AG04450 (cell line): ENCODE measurements at regions of chr3 and their contacts with region 1.

Region 1: GRCh38 chr3:11335056-11335608 is 62.9 kb downstream of the ATG7 start:
- DNase-seq: peak; percentile 45
- H3K4me3 ChIP-seq: no peak overlapping the region
- H3K27ac ChIP-seq: no peak overlapping the region
- H3K27me3 ChIP-seq: no peaks in the 10 kb centered on the region
- CTCF ChIP-seq: peak; percentile 71

Region 2: DNA sequence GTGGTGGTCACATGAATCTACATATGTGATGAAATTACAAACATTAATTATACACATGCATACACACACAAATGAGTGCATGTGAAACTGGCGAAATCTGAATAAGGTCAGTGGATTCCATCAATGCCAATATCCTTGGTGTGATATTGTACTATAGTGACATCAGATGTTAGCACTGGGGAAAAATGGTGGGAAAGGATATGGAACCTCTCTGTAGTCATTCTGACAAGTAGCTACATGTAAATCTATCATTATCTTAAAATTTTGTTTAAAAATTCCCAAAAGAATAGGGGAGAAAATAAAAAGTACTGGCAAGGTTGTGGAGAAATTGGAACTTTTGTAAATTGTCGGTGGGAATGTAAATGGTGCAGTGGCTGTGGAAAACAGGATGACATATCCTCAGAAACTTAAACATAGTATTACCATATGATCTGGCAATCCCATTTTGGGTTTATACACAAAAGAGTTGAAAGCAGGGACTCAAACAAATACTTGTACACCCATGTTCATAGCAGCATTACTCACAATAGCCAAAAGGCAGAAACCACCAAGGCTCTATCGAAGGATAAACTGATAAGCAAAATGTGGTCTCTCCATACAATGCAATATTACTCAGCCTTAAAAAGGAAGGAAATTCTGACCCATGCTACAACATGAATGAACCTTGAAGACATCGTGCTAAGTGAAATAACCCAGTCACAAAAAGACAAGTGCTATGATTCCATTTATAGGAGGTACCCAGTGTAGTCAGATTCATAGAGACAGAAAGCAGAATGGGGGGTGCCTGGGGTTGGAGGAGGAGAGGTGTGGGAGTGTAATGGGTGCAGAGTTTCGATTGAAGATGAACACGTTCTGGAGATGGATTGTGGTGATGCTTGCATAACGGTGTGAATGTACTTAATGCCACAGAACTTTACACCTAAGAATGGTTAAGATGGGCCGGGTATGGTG is 206.2 kb before region 1 on chr3:
- CTCF ChIA-PET with region 1: no interaction called
- POLR2A ChIA-PET with region 1: no interaction called
- DNase-seq: no peak
- H3K4me3 ChIP-seq: no peak overlapping the region
- H3K27ac ChIP-seq: no peak overlapping the region
- H3K27me3 ChIP-seq: no peaks in the 10 kb centered on the region
- CTCF ChIP-seq: no peak

Region 3: GRCh38 chr3:11155341-11156025 is 179.6 kb before region 1 on chr3:
- CTCF ChIA-PET with region 1: interaction called, 112 read pairs
- POLR2A ChIA-PET with region 1: no interaction called
- DNase-seq: peak; percentile 60
- H3K4me3 ChIP-seq: peak overlapping the region; percentile 85
- H3K27ac ChIP-seq: peak overlapping the region; percentile 75
- H3K27me3 ChIP-seq: no peaks in the 10 kb centered on the region
- CTCF ChIP-seq: peak; percentile 96

Region 4: GRCh38 chr3:11211531-11212298 is 123.4 kb before region 1 on chr3:
- CTCF ChIA-PET with region 1: interaction called, 16 read pairs
- POLR2A ChIA-PET with region 1: no interaction called
- DNase-seq: no peak
- H3K4me3 ChIP-seq: no peak overlapping the region
- H3K27ac ChIP-seq: no peak overlapping the region
- H3K27me3 ChIP-seq: no peaks in the 10 kb centered on the region
- CTCF ChIP-seq: peak; percentile 35

Region 5: GRCh38 chr3:11271986-11272904 is 62.9 kb before region 1 on chr3 and contains the start of gene ATG7:
- CTCF ChIA-PET with region 1: interaction called, 9 read pairs
- POLR2A ChIA-PET with region 1: interaction called, 10 read pairs
- DNase-seq: peak; percentile 93
- H3K4me3 ChIP-seq: peak within 1 kb of the TSS; percentile 97
- H3K27ac ChIP-seq: peak within 1 kb of the TSS; percentile 70
- H3K27me3 ChIP-seq: no peaks in the 10 kb centered on the region
- CTCF ChIP-seq: 0 out of 2 replicates have a peak, but pooled peaks have one; percentile 6
- polyA plus RNA-seq, gene ATG7: 35.4 and 51.7 TPM in 2 replicates

Region 6: DNA sequence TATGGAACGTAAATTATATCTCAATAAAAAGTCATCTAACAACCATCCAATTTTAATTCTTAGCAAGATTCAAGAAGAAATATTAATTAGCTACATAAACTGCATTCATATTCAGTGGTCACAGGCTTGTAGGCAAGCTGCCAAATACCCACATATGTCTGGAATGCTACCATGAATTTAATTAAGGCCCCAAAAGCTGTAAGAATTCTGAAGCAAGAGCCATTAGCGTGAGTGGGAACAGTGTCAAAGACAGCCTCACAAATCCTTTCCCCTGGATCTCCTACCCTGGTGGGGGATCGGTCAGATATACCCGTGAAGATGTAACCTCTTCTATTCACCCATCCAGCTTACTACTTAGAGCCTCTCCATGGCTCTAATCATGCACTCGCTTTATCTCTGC is 23.0 kb before region 1 on chr3:
- CTCF ChIA-PET with region 1: interaction called, 21 read pairs
- POLR2A ChIA-PET with region 1: no interaction called
- DNase-seq: no peak
- H3K4me3 ChIP-seq: no peak overlapping the region
- H3K27ac ChIP-seq: no peak overlapping the region
- H3K27me3 ChIP-seq: no peaks in the 10 kb centered on the region
- CTCF ChIP-seq: no peak

Region 7: DNA sequence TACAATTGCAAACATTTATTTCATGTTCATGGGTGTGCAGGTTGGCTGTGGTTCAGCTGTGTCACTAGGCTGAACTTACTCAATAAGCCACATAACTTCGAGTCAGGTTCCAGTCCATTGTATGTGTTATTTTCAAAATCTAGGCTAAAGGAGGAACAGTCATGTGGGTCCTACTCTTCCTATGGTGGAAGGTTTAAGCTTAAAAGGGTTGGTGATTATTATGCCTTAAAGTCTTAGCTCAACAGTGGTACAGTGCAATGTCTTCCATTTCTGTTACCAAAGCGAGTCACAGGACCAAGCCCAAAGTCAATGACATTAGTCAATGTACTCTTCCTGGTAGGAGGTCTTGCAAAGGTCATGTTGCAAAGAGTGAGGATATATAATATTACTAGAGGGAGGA is 15.2 kb after region 1 on chr3:
- CTCF ChIA-PET with region 1: interaction called, 29 read pairs
- POLR2A ChIA-PET with region 1: interaction called, 11 read pairs
- DNase-seq: no peak
- H3K4me3 ChIP-seq: no peak overlapping the region
- H3K27ac ChIP-seq: peak overlapping the region; percentile 49
- H3K27me3 ChIP-seq: no peaks in the 10 kb centered on the region
- CTCF ChIP-seq: no peak

Region 8: DNA sequence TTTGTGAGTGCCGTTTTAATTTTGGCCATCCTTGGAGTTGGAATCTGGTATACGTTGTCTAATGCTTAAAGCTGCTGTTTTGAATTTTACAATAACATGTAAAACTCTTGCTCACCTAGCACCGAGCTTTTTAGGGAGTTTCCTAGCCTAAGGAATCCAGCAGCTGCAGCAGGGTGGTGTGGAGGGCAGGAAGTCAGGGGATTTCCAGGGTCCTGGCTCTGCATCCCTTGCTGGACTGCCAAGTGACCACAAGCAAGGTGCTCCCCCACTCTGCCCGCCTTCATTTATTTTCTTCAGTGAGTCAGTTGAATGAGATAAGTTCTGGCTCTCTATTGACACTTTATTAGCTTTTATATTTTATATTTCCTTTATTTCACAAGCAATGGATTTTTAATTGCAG is 50.8 kb after region 1 on chr3:
- CTCF ChIA-PET with region 1: no interaction called
- POLR2A ChIA-PET with region 1: no interaction called
- DNase-seq: no peak
- H3K4me3 ChIP-seq: no peak overlapping the region
- H3K27ac ChIP-seq: peak overlapping the region; percentile 47
- H3K27me3 ChIP-seq: no peaks in the 10 kb centered on the region
- CTCF ChIP-seq: no peak